WTC11 (cell line): ENCODE measurements at regions of chr1 and their contacts with region 1.

Region 1: GRCh38 chr1:230581446-230582079 is 60.7 kb upstream of the COG2 start:
- DNase-seq: peak; percentile 63
- ATAC-seq: peak; percentile 88
- H3K4me3 Mint-ChIP-seq: peak overlapping the region; percentile 42
- H3K27ac Mint-ChIP-seq: no peak overlapping the region
- H3K4me1 Mint-ChIP-seq: peaks cover 27% of the 10 kb centered on the region
- H3K27me3 Mint-ChIP-seq: peaks cover 22% of the 10 kb centered on the region
- CTCF ChIP-seq: no peak

Region 2: DNA sequence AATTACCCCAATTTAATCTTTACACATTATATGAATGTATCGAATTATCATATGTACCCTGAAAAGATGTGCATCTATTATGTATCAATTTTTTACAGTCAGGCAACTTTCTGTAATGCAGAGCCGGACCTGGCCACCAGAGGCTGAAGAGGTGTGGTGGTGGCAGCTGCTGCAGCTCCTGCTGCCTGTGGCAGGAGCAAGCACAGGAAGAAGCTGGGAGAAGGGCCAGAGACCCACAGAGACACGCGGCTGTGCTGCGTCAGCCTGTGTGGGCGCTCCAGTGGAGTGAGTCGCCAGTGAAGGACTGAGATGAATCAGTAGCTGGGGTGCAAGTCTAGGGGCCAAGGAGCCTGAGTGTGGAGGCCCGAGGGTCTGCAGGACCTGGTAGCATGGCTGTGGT is 13.6 kb before region 1 on chr1:
- CTCF ChIA-PET with region 1: interaction called, 13 read pairs
- POLR2A ChIA-PET with region 1: no interaction called
- DNase-seq: peak; percentile 44
- ATAC-seq: peak; percentile 95
- H3K4me3 Mint-ChIP-seq: no peak overlapping the region
- H3K27ac Mint-ChIP-seq: no peak overlapping the region
- H3K4me1 Mint-ChIP-seq: peaks cover 11% of the 10 kb centered on the region
- H3K27me3 Mint-ChIP-seq: no peaks in the 10 kb centered on the region
- CTCF ChIP-seq: peak; percentile 17; the same call in 1 of the 2 replicates

Region 3: GRCh38 chr1:230930986-230931385 is 349.4 kb after region 1 on chr1:
- CTCF ChIA-PET with region 1: no interaction called
- POLR2A ChIA-PET with region 1: no interaction called
- DNase-seq: no peak
- ATAC-seq: no peak
- H3K4me3 Mint-ChIP-seq: no peak overlapping the region
- H3K27ac Mint-ChIP-seq: no peak overlapping the region
- H3K4me1 Mint-ChIP-seq: no peaks in the 10 kb centered on the region
- H3K27me3 Mint-ChIP-seq: no peaks in the 10 kb centered on the region; the same call in 1 of the 2 replicates
- CTCF ChIP-seq: no peak